Activated T-helper 1 cell treated with anti-CD3 and anti-CD28 coated beads, Interleukin-12 subunit alpha, Interleukin-12 subunit beta, Interleukin-2, Interleukin-4 antibody, amounts not matched to agents 30 ng/mL and 10 ng/mL and 1 ng/mL, durations not matched to agents 14 hours and 24 hours and 36 hours (primary cell): ENCODE measurements at regions of chr1 and their contacts with region 1.

Region 1: DNA sequence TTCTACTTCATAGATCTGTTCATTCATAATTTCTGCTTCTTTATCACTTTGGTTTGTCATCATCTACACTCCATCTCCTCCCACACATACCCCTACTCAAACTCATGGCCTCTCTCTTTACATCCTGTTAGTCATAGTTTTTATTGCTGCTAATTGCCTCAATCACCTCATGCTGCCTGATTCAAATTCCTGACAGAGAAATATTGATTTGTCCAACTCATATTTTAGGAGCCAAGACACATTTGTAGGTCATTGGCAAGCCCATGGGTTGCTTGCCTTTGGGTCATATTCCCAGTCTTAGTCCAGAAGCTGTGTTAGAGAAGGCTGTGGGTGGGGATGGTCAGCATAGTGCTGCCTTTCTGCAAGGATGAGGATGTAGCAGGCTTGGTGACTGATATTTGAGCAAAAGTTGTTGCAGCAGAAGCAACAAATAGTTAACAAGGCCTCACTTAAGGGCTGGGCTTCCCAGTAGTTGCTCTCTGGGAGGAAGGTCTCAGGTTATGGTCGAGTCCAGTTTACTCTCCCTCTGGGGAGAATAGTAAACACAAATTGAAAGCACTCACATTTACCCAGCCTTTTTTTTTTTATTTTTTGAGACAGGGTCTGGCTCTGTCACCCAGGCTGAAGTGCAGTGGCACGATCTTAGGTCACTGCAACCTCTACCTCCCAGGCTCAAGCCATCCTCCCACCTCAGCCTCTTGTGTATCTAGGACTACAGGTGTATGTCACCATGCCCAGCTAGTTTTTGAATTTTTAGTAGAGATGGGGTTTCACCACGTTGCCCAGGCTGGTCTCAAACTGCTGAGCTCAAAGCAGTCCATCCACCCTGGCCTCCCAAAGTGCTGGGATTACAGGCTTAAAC is 22.5 kb upstream of the EPS15 start:
- DNase-seq: no peak
- H3K4me3 Mint-ChIP-seq: no peak overlapping the region
- H3K27ac Mint-ChIP-seq: peak overlapping the region; percentile 65
- H3K4me1 Mint-ChIP-seq: peaks cover 29% of the 10 kb centered on the region
- H3K27me3 Mint-ChIP-seq: peaks cover 2% of the 10 kb centered on the region

Region 2: GRCh38 chr1:51506537-51506936 is 35.0 kb before region 1 on chr1:
- intact Hi-C with region 1: loop called (anchors 1 kb)
- DNase-seq: no peak
- H3K4me3 Mint-ChIP-seq: no peak overlapping the region
- H3K27ac Mint-ChIP-seq: no peak overlapping the region
- H3K4me1 Mint-ChIP-seq: peaks cover 34% of the 10 kb centered on the region
- H3K27me3 Mint-ChIP-seq: no peaks in the 10 kb centered on the region